Right ventricle myocardium superior (tissue), 1 donor: ENCODE measurements at regions of chr6 and their contacts with region 1.

Region 1: GRCh38 chr6:106223300-106223930 is 102.1 kb downstream of the ATG5 start:
- DNase-seq: no peak
- ATAC-seq: peak; percentile 65

Region 2: DNA sequence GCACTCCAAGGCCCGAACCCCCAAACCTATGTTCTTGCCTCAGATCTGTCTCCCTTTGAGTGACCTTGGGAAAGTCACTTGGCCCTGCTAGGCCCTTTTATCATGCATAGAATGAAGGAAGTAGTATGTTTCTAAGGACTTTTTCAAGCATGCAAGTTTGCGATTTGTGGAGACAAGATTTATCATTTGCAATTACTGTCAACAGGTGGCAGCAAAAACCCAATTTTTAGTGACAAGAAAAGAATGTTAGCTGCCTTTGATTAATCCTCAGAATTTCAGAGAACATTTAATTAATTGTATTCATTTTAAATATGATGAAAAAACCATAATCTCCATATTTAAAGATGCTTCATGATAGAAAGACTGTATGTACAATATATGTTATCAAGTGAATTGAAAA is 792.2 kb before region 1 on chr6:
- intact Hi-C with region 1: loop called (anchors 5 kb)
- DNase-seq: no peak
- ATAC-seq: no peak

Region 3: DNA sequence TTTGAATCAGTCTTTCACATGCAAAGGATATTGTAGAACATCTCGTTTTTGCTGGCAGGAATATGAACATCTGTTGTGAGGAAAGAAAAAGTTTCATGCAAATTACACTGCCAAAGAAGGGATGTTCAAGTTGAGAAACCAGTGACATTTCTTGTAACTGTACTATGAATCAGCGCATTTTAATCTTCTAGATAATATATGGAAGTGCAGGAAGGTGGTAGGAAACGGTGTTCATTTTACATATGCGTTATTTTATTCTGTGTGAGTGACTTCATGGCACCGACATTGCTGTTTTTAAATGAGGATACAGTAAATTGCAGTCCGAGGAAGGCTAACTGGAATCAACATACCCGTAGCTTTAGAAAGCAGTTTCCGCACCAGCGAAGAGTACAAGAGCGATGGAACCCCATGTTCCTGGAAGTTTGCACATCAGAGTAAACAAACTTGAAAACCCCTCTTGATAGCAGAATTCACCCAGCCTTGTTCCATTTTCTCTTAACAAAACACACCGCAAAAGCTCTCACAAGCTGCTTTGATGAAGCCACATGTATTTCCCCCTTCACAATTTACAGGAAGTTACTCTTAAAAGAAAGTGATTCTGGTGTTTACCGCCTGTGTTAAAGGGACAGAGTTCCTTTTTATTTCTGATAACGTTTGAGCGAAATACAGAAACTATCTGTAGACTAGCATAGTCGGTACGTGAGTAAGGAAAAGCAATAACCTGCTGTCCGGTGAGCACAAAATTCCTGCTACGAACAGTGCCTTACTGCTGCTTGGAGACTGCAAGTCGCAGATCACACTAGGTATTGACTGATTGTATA is 125.8 kb before region 1 on chr6:
- intact Hi-C with region 1: loop called (anchors 10 kb)
- DNase-seq: no peak
- ATAC-seq: peak; percentile 66

Region 4: DNA sequence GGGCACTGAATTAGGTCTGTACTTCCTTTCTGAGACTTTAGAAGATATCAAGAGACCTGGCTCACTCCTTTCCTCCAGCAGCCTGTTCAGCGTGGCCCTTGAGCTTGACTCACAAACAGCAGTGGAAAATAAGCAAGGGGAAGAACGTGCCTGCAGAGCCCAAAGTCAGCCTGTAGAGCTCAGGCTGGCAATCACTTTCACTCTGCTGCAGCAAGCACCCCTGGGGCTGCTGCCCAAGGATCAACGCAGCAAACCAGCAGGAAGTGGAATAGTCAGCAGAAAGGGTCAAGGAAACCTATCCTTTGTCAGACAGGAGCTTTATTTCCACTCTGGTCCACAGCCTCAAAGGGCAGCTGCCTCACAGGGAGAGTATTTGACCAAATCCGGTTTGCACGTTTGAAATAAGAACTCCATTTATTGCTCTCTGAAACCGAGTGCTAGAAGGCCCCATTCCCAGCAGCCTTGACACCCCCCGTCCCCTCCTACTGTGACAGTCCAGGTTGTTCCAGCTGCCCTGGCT is 59.9 kb before region 1 on chr6:
- intact Hi-C with region 1: no loop called
- DNase-seq: no peak
- ATAC-seq: peak; percentile 53